Activated CD4-positive, alpha-beta memory T cell treated with anti-CD3 and anti-CD28 coated beads, Interleukin-2, amount 10 ng/mL, durations not matched to agents 7 days and 5 days (primary cell): ENCODE measurements at regions of chr6 and their contacts with region 1.

Region 1: GRCh38 chr6:127539272-127539671 is 20.1 kb upstream of the MTCL3 start:
- DNase-seq: no peak
- H3K4me3 Mint-ChIP-seq: no peak overlapping the region
- H3K27ac Mint-ChIP-seq: no peak overlapping the region
- H3K4me1 Mint-ChIP-seq: peaks cover 5% of the 10 kb centered on the region
- H3K27me3 Mint-ChIP-seq: peaks cover 19% of the 10 kb centered on the region

Region 2: GRCh38 chr6:127186889-127187288 is 352.4 kb before region 1 on chr6:
- CTCF ChIA-PET with region 1: interaction called, 15 read pairs
- POLR2A ChIA-PET with region 1: no interaction called
- DNase-seq: peak; percentile 70
- H3K4me3 Mint-ChIP-seq: no peak overlapping the region
- H3K27ac Mint-ChIP-seq: no peak overlapping the region
- H3K4me1 Mint-ChIP-seq: no peaks in the 10 kb centered on the region
- H3K27me3 Mint-ChIP-seq: peaks cover 8% of the 10 kb centered on the region

Region 3: GRCh38 chr6:127302728-127303660 is 236.3 kb before region 1 on chr6:
- CTCF ChIA-PET with region 1: interaction called, 42 read pairs
- POLR2A ChIA-PET with region 1: no interaction called
- DNase-seq: peak; percentile 36
- H3K4me3 Mint-ChIP-seq: no peak overlapping the region
- H3K27ac Mint-ChIP-seq: no peak overlapping the region
- H3K4me1 Mint-ChIP-seq: peaks cover 7% of the 10 kb centered on the region
- H3K27me3 Mint-ChIP-seq: no peaks in the 10 kb centered on the region

Region 4: GRCh38 chr6:127464881-127465459 is 74.3 kb before region 1 on chr6:
- CTCF ChIA-PET with region 1: interaction called, 42 read pairs
- POLR2A ChIA-PET with region 1: no interaction called
- DNase-seq: peak; percentile 70
- H3K4me3 Mint-ChIP-seq: no peak overlapping the region
- H3K27ac Mint-ChIP-seq: no peak overlapping the region
- H3K4me1 Mint-ChIP-seq: peaks cover 15% of the 10 kb centered on the region
- H3K27me3 Mint-ChIP-seq: no peaks in the 10 kb centered on the region

Region 5: DNA sequence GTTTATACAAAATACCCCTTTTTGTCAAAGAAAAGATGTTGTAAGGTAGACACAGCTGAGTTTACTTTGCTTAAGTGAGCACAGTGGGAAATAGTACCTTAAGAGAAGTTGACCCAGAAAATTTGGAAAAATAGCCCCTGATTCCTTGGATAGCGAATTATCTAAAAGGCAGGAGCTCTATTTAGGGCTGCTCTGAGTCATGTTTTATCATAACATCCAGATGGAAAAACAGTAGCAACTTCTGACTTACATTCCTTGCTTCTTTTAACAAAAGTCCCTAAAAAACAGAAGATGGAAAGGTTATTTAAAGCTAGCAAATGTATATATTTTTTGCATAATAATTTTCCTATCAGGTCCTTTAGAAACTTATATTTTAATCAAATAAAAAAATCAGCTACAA is 302.5 kb after region 1 on chr6:
- CTCF ChIA-PET with region 1: no interaction called
- POLR2A ChIA-PET with region 1: no interaction called
- DNase-seq: no peak
- H3K4me3 Mint-ChIP-seq: no peak overlapping the region
- H3K27ac Mint-ChIP-seq: no peak overlapping the region
- H3K4me1 Mint-ChIP-seq: no peaks in the 10 kb centered on the region
- H3K27me3 Mint-ChIP-seq: no peaks in the 10 kb centered on the region